ENCODE measurements at regions of chr20 and their contacts with region 1.

Region 1: GRCh38 chr20:1663917-1664316 is 6.3 kb upstream of the SIRPG start:
- DNase-seq: no peak
- ATAC-seq: no peak
- H3K4me3 ChIP-seq: no peak overlapping the region
- H3K27ac ChIP-seq: no peak overlapping the region
- H3K4me1 ChIP-seq: no peaks in the 10 kb centered on the region
- H3K27me3 ChIP-seq: no peaks in the 10 kb centered on the region
- CTCF ChIP-seq: no peak

Region 2: DNA sequence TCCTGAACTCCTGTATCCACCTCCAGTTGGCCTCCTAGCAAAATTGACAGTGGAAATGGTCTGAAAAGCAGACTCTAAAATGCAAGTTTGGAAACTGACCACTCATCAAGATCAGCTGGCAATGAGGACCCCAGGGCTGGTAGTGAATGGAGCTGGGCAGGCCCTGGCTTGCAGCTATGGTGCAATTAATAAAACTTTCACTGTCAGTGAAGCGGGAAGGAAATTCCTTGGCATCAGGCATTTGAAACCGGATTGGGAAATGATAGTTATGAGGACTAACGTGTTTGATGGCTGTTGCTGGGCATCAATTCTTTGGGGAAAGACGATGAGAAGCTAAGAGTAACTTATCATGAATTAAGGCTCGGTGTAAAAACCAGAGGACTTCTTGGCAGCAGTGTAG is 63.2 kb before region 1 on chr20:
- intact Hi-C with region 1: no loop called
- DNase-seq: no peak
- ATAC-seq: no peak
- H3K4me3 ChIP-seq: no peak overlapping the region
- H3K27ac ChIP-seq: no peak overlapping the region
- H3K4me1 ChIP-seq: no peaks in the 10 kb centered on the region
- H3K27me3 ChIP-seq: no peaks in the 10 kb centered on the region
- CTCF ChIP-seq: no peak

Region 3: GRCh38 chr20:1721687-1722512 is 58.0 kb after region 1 on chr20:
- intact Hi-C with region 1: loop called in 1 of 2 experiments (anchors 10 kb)
- DNase-seq: no peak
- ATAC-seq: no peak
- H3K4me3 ChIP-seq: no peak overlapping the region
- H3K27ac ChIP-seq: no peak overlapping the region
- H3K4me1 ChIP-seq: no peaks in the 10 kb centered on the region
- H3K27me3 ChIP-seq: peaks cover 0 to 3% (median 0%) of the 10 kb centered on the region in 3 donors
- CTCF ChIP-seq: no peak

Measured in psoas muscle (tissue), 8 donors.